CD4-positive, alpha-beta memory T cell (primary cell): ENCODE measurements at regions of chr15 and their contacts with region 1.

Region 1: DNA sequence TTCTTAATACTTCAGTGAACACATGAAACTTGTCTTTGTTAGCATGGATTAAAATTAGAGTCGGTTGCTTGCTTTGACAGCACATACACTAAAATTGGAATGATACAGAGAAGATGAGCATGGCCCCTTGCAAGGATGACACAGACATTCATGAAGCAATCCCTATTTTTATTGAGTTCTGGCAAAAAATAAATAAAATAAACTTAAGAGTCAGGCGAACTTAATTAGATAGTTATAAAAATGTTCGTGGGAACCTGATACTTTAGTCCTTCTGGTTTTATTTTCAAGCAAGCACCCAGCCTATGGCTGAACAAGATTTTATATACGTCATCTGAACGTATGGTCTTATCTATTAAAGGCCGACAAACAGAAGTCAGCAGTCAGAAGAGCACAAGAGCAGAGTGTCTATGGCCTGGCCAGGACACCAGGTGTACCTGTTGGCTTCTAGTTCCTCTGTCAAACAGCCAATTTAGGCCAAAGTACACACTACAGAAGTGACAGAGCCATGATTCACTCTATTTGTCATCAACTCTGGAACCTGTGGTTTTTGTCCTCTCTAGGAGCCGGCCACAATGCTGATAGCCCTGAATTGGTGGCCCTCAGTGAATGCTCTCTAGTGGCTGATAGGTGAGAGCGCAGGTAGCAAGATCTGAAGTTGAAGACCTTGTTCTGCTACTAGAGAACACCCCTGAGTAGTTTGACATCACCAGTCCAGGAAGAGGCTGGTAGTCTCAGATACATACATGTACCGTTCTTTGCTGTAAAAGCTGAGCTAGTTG is 64.3 kb downstream of the LEO1 start:
- DNase-seq: no peak
- H3K4me3 ChIP-seq: no peak overlapping the region
- H3K4me3 Mint-ChIP-seq: no peak overlapping the region
- H3K27ac ChIP-seq: no peak overlapping the region
- H3K27ac Mint-ChIP-seq: no peak overlapping the region
- H3K4me1 ChIP-seq: no peaks in the 10 kb centered on the region
- H3K4me1 Mint-ChIP-seq: peaks cover 0 to 4% (median 1%) of the 10 kb centered on the region in 4 donors
- H3K27me3 ChIP-seq: no peaks in the 10 kb centered on the region
- H3K27me3 Mint-ChIP-seq: no peaks in the 10 kb centered on the region

Region 2: GRCh38 chr15:51846463-51847230 is 60.7 kb before region 1 on chr15:
- CTCF ChIA-PET with region 1: no interaction called
- POLR2A ChIA-PET with region 1: no interaction called
- intact Hi-C with region 1: no loop called
- DNase-seq: no peak
- H3K4me3 ChIP-seq: no peak overlapping the region
- H3K4me3 Mint-ChIP-seq: peak overlapping the region in 6 of 8 donors; percentile 14 to 60 (median 56)
- H3K27ac ChIP-seq: no peak overlapping the region
- H3K27ac Mint-ChIP-seq: peak overlapping the region in 5 of 7 donors; percentile 11 to 76 (median 70)
- H3K4me1 ChIP-seq: peaks cover 73% of the 10 kb centered on the region
- H3K4me1 Mint-ChIP-seq: peaks cover 57 to 85% (median 71%) of the 10 kb centered on the region in 4 donors
- H3K27me3 ChIP-seq: no peaks in the 10 kb centered on the region
- H3K27me3 Mint-ChIP-seq: no peaks in the 10 kb centered on the region

Region 3: DNA sequence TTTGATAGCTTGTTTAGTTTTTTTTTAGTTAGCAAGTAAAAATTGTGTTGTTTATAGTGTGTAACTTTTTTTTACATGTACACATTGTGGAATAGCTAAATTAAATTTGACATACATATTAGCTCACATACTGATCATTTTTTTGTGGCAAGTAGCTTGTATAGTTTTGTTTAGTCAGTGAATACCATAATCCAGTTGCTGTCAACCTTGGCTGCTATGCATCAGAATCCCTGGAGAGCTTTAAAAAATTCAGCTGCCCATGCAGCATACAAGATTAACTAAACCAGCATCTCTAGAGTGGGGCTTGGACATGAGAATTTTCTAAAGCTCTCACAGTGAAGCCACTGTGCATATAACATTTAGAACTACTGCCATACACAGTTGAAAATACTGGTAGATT is 23.9 kb before region 1 on chr15:
- CTCF ChIA-PET with region 1: interaction called, 27 read pairs
- POLR2A ChIA-PET with region 1: no interaction called
- intact Hi-C with region 1: no loop called
- DNase-seq: no peak
- H3K4me3 ChIP-seq: no peak overlapping the region
- H3K4me3 Mint-ChIP-seq: no peak overlapping the region
- H3K27ac ChIP-seq: no peak overlapping the region
- H3K27ac Mint-ChIP-seq: peak overlapping the region in 3 of 7 donors; percentile 30 to 78 (median 39)
- H3K4me1 ChIP-seq: peaks cover 8% of the 10 kb centered on the region
- H3K4me1 Mint-ChIP-seq: peaks cover 17 to 34% (median 24%) of the 10 kb centered on the region in 4 donors
- H3K27me3 ChIP-seq: no peaks in the 10 kb centered on the region
- H3K27me3 Mint-ChIP-seq: no peaks in the 10 kb centered on the region

Region 4: GRCh38 chr15:51888593-51889195 is 18.6 kb before region 1 on chr15:
- CTCF ChIA-PET with region 1: interaction called, 27 read pairs
- POLR2A ChIA-PET with region 1: no interaction called
- intact Hi-C with region 1: no loop called
- DNase-seq: peak in 3 of 5 donors; percentile 8 to 20 (median 19)
- H3K4me3 ChIP-seq: no peak overlapping the region
- H3K4me3 Mint-ChIP-seq: no peak overlapping the region
- H3K27ac ChIP-seq: no peak overlapping the region
- H3K27ac Mint-ChIP-seq: peak overlapping the region in 2 of 7 donors; percentile 0 to 13
- H3K4me1 ChIP-seq: no peaks in the 10 kb centered on the region
- H3K4me1 Mint-ChIP-seq: peaks cover 6 to 16% (median 7%) of the 10 kb centered on the region in 4 donors
- H3K27me3 ChIP-seq: no peaks in the 10 kb centered on the region
- H3K27me3 Mint-ChIP-seq: no peaks in the 10 kb centered on the region